GM12878 (cell line): ENCODE measurements at regions of chr11 and their contacts with region 1.

Region 1: DNA sequence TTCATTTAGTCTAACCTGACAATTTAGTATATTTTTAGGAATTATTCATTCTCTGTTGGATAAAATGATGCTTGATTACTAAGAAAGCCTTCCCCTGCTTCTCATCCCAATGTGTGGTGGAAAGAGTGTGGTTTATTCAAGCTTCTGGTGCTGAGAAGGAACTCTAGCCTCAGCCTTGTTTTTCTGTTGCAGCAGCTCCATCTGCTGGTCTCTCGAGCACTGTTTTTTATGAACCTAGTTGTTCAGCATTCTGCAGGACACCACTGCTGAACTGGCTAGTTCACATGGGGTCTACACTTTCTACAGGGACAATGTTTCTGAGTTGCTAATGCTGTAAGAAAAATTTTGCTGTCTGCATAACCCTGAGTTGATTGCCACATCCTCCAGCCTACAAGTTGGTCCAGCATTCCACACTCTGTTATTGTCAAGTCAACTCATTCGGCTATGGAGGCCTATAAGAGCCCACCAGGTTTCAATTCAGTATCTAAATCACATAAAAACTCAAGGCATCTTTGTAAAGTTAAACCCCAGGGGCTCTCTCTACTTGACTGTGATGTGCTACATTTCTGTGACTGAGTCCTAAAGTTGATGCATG is 14.3 kb downstream of the OR2AG2 start:
- DNase-seq: no peak
- ATAC-seq: peak; percentile 95
- H3K4me3 ChIP-seq: no peak overlapping the region
- H3K27ac ChIP-seq: no peak overlapping the region
- H3K4me1 ChIP-seq: no peaks in the 10 kb centered on the region
- H3K27me3 ChIP-seq: no peaks in the 10 kb centered on the region
- CTCF ChIP-seq: peak; percentile 79 to 89 (median 82)
- EP300 ChIP-seq: no peak
- POLR2A ChIP-seq: no peak
- RAD21 ChIP-seq: peak; percentile 95

Region 2: DNA sequence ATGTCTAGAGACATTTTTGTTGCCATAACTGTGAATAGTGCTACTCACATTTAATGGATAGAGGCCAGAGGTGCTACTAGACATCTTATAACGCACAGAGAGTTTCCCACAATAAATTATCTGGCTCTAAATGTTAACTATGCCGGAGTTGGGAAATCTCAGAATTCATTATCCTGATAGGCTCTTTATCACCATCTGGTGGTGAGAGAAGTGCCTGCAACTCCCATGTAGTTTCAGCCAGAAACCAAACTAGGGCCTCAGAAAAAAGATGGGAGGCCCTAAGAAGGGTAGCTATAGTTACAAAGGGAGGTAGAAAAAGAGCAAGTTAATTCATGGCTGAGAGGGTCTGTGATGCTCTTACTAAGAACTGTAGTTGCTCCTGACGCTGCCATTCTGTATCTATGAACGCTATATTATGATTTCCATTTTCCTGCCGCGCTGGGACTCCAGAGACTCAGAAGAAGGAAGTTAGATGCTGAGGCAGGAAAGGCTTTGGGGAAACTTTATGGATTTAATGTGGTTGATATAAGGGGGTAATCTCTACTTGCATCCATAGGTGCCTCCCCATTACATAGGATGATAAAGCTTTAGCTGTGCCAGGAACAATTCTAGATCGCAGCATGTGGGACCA is 51.5 kb before region 1 on chr11:
- CTCF ChIA-PET with region 1: interaction called, 97 read pairs
- POLR2A ChIA-PET with region 1: no interaction called
- RAD21 ChIA-PET with region 1: interaction called, 7 read pairs
- SMC1A ChIA-PET with region 1: interaction called, 8 read pairs
- in situ Hi-C with region 1: no loop called
- intact Hi-C with region 1: loop called (anchors 1 kb)
- DNase-seq: no peak
- ATAC-seq: peak; percentile 83
- H3K4me3 ChIP-seq: no peak overlapping the region
- H3K27ac ChIP-seq: no peak overlapping the region
- H3K4me1 ChIP-seq: no peaks in the 10 kb centered on the region
- H3K27me3 ChIP-seq: no peaks in the 10 kb centered on the region
- CTCF ChIP-seq: peak; percentile 77 to 92 (median 84)
- EP300 ChIP-seq: no peak
- POLR2A ChIP-seq: no peak
- RAD21 ChIP-seq: peak; percentile 71

Region 3: DNA sequence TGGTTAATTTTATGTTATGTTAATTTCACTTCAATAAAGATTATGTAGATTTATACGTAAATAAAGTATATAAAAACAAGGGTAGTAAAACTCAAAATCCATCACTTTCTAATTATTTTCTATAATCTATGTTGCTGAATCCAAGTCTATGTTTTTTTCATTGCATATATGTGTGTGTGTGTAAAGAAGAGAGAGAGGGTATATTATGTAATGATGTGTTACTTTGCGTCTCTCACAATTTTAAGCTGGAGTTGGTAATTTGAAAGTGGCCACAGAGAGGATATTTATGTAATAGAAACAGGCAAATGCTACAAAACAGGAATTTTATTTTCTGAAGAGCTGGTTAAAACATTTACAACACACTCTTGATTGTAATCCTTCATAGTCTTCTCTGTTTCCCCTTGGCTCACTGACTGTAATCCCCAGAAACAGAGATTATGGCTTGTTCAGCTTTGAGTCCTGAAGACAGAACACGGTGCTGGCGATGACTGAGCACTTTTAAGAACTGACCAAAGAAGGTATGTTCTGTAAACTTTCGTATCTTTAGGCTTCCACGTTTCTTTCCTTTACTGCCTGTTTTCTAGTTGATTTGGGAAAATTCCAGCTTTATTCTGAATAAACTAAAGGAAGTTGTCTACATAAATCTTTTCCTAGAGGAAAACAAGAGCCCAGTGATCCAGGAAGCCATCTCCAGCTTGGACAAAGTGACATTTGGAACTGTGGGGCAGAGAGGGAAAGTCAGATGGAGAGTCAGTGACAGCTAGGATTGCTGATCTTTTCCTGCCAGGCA is 29.3 kb before region 1 on chr11:
- CTCF ChIA-PET with region 1: interaction called, 728 read pairs
- POLR2A ChIA-PET with region 1: no interaction called
- RAD21 ChIA-PET with region 1: interaction called, 3 read pairs
- SMC1A ChIA-PET with region 1: interaction called, 420 read pairs
- in situ Hi-C with region 1: no loop called
- intact Hi-C with region 1: no loop called
- DNase-seq: no peak
- ATAC-seq: no peak
- H3K4me3 ChIP-seq: no peak overlapping the region
- H3K27ac ChIP-seq: no peak overlapping the region
- H3K4me1 ChIP-seq: peaks cover under 1% of the 10 kb centered on the region; the same call in 1 of the 2 replicates
- H3K27me3 ChIP-seq: no peaks in the 10 kb centered on the region
- CTCF ChIP-seq: no peak
- EP300 ChIP-seq: no peak
- POLR2A ChIP-seq: no peak
- RAD21 ChIP-seq: no peak

Region 4: GRCh38 chr11:6746086-6746618 is 11.3 kb before region 1 on chr11:
- CTCF ChIA-PET with region 1: interaction called, 728 read pairs
- POLR2A ChIA-PET with region 1: interaction called, 6 read pairs
- RAD21 ChIA-PET with region 1: interaction called, 141 read pairs
- SMC1A ChIA-PET with region 1: interaction called, 420 read pairs
- in situ Hi-C with region 1: no loop called
- intact Hi-C with region 1: no loop called
- DNase-seq: peak; percentile 68
- ATAC-seq: peak; percentile 83
- H3K4me3 ChIP-seq: peak overlapping the region; percentile 71
- H3K27ac ChIP-seq: peak overlapping the region; percentile 99
- H3K4me1 ChIP-seq: peaks cover 22% of the 10 kb centered on the region; the same call in 1 of the 2 replicates
- H3K27me3 ChIP-seq: no peaks in the 10 kb centered on the region
- CTCF ChIP-seq: no peak
- EP300 ChIP-seq: no peak
- POLR2A ChIP-seq: peak; percentile 83
- RAD21 ChIP-seq: no peak

Region 5: GRCh38 chr11:6812390-6813005 is 55.0 kb after region 1 on chr11:
- CTCF ChIA-PET with region 1: interaction called, 10 read pairs
- POLR2A ChIA-PET with region 1: no interaction called
- RAD21 ChIA-PET with region 1: no interaction called
- SMC1A ChIA-PET with region 1: no interaction called
- in situ Hi-C with region 1: no loop called
- intact Hi-C with region 1: no loop called
- DNase-seq: peak; percentile 11
- ATAC-seq: peak; percentile 97
- H3K4me3 ChIP-seq: no peak overlapping the region
- H3K27ac ChIP-seq: no peak overlapping the region
- H3K4me1 ChIP-seq: no peaks in the 10 kb centered on the region
- H3K27me3 ChIP-seq: no peaks in the 10 kb centered on the region
- CTCF ChIP-seq: peak; percentile 70 to 98 (median 87)
- EP300 ChIP-seq: no peak
- POLR2A ChIP-seq: no peak
- RAD21 ChIP-seq: peak; percentile 76

Region 6: DNA sequence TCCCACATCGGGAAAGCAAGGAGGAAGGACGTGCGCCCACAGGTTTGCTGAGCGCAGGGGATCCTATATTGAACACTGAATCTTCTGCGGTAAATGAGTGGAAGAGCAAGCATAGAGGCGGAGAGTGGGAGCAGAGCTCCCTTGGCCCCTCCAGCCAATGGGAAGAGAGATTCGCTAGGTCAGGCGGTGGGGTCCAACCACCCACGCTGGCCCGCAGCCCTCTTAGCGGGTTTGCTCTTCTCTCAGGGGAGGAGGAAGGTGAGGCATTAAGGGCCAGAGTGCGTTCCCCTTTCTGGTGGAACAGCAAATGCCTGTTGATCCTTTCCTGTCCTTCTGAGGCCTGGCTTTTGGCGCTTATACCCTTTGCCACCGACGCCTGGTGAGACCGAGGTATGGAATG is 273.4 kb after region 1 on chr11:
- CTCF ChIA-PET with region 1: no interaction called
- POLR2A ChIA-PET with region 1: no interaction called
- RAD21 ChIA-PET with region 1: no interaction called
- SMC1A ChIA-PET with region 1: no interaction called
- in situ Hi-C with region 1: no loop called
- intact Hi-C with region 1: no loop called
- DNase-seq: no peak
- ATAC-seq: no peak
- H3K4me3 ChIP-seq: no peak overlapping the region
- H3K27ac ChIP-seq: no peak overlapping the region
- H3K4me1 ChIP-seq: no peaks in the 10 kb centered on the region
- H3K27me3 ChIP-seq: no peaks in the 10 kb centered on the region; a peak in 1 of 4 replicates
- CTCF ChIP-seq: no peak
- EP300 ChIP-seq: no peak
- POLR2A ChIP-seq: no peak
- RAD21 ChIP-seq: no peak